GM18951 (cell line): ENCODE measurements at regions of chr17 and their contacts with region 1.

Region 1: GRCh38 chr17:43324205-43324893 is 74.4 kb upstream of the ARL4D start:
- POLR2A ChIP-seq: no peak

Region 2: DNA sequence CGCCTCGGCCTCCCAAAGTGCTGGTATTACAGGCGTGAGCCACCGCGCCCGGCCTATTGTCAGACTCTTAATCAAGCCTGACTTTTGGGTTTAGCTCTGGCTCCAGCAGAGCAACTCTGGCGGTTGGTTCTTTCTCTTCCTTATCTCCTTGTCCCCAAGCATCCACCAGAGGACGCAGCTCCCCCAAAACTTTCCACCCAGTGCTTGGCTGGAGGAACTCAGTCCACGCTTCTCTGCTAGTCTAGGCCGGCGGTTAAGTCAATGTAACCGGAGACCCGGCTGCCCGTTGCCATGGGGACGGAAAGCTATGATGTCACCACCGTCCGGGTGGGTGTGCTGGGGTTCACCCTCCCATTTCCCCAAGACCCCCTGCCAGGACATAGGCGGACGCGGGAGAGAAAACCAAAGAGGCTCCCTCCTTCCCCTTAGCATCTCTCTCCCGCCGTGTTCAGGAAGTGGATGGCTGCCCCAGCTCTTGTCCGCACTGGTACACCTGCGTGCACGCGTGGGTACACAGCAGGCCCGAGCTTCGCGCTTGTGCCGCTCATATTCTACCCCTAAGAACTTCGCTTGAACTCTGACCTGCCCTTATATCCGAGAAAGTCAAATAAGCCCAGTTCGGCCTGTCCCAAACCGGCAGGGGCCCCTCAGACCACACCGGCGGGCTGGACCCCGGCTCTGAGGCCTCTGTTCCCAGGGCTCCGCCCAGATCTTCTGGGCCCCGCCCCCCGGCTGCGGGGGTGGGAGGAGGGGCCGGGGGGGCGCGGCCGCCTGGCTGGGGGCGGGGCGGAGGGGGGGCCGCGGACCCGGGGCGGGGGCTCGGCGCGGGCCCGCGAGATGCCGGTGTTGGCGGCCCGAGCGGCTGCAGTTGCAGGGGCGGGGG is 299.7 kb before region 1 on chr17 and contains the start of gene RND2:
- in situ Hi-C with region 1: loop called (anchors 25 kb)
- POLR2A ChIP-seq: no peak

Region 3: DNA sequence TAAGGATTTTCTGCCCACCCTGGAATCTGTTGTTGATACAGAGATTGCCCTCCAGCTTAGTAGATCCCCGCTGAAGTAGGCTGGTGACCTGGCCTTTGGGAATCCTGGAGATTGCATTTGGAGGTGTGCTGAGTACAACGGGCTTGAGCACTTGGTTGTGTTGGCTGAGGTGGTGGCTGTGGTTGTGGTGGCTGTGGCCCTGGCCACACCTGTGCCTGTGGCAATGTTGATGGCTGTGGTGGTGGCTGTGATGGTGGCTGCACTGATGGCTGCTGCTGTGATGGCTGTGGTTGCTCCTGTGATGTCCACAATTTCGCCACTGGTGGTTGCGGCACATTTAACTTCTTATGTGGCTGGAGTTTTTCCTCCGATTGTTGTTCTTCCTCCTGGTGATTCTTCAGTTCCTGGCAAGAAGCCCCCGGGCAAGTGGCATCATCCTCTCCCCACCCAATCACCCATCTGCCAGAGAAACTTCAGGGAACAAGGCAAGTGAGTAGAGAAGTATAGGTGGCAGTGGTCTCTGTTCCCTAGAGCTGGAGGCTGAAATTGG is 100.1 kb before region 1 on chr17:
- in situ Hi-C with region 1: no loop called
- POLR2A ChIP-seq: no peak

Region 4: GRCh38 chr17:43467981-43468581 is 143.7 kb after region 1 on chr17:
- in situ Hi-C with region 1: no loop called
- POLR2A ChIP-seq: no peak